CD4-positive, alpha-beta memory T cell (primary cell): ENCODE measurements at regions of chr19 and their contacts with region 1.

Region 1: GRCh38 chr19:23799321-23799720 is 40.6 kb upstream of the ZNF681 start:
- DNase-seq: peak; percentile 59 to 73 (median 65)
- H3K4me3 ChIP-seq: peak overlapping the region in 1 of 2 donors; percentile 45
- H3K4me3 Mint-ChIP-seq: peak overlapping the region; percentile 82 to 94 (median 88)
- H3K27ac ChIP-seq: peak overlapping the region; percentile 51
- H3K27ac Mint-ChIP-seq: peak overlapping the region; percentile 93 to 98 (median 96)
- H3K4me1 ChIP-seq: peaks cover 46% of the 10 kb centered on the region
- H3K4me1 Mint-ChIP-seq: peaks cover 26 to 52% (median 34%) of the 10 kb centered on the region in 4 donors
- H3K27me3 ChIP-seq: no peaks in the 10 kb centered on the region
- H3K27me3 Mint-ChIP-seq: no peaks in the 10 kb centered on the region

Region 2: GRCh38 chr19:23378948-23379347 is 420.4 kb before region 1 on chr19:
- CTCF ChIA-PET with region 1: no interaction called
- POLR2A ChIA-PET with region 1: interaction called, 19 read pairs
- intact Hi-C with region 1: no loop called
- DNase-seq: no peak
- H3K4me3 ChIP-seq: no peak overlapping the region
- H3K4me3 Mint-ChIP-seq: no peak overlapping the region
- H3K27ac ChIP-seq: no peak overlapping the region
- H3K27ac Mint-ChIP-seq: peak overlapping the region in 1 of 7 donors; percentile 77
- H3K4me1 ChIP-seq: no peaks in the 10 kb centered on the region
- H3K4me1 Mint-ChIP-seq: peaks cover 1 to 31% (median 18%) of the 10 kb centered on the region in 4 donors
- H3K27me3 ChIP-seq: no peaks in the 10 kb centered on the region
- H3K27me3 Mint-ChIP-seq: no peaks in the 10 kb centered on the region

Region 3: DNA sequence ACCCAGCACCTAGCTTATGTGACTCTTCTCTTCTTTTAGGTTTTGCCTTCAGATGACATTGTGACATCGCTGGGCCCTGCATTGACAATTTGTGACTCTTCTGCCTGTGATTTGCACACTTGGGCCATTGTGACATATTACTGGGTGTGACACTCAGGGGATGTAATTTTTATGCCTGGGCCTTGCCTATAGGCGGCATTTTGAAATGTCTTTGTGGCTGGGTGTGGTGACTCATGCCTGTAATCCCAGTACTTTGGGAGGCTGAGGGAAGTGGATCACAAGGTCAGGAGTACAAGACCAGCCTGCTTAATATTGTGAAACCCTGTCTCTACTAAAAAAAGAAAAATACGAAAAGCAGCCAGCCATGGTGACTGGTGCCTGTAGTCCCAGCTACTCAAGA is 12.2 kb before region 1 on chr19:
- CTCF ChIA-PET with region 1: no interaction called
- POLR2A ChIA-PET with region 1: no interaction called
- intact Hi-C with region 1: no loop called
- DNase-seq: no peak
- H3K4me3 ChIP-seq: no peak overlapping the region
- H3K4me3 Mint-ChIP-seq: no peak overlapping the region
- H3K27ac ChIP-seq: no peak overlapping the region
- H3K27ac Mint-ChIP-seq: peak overlapping the region in 1 of 7 donors; percentile 62
- H3K4me1 ChIP-seq: no peaks in the 10 kb centered on the region
- H3K4me1 Mint-ChIP-seq: peaks cover 0 to 4% (median 0%) of the 10 kb centered on the region in 4 donors
- H3K27me3 ChIP-seq: no peaks in the 10 kb centered on the region
- H3K27me3 Mint-ChIP-seq: no peaks in the 10 kb centered on the region

Region 4: DNA sequence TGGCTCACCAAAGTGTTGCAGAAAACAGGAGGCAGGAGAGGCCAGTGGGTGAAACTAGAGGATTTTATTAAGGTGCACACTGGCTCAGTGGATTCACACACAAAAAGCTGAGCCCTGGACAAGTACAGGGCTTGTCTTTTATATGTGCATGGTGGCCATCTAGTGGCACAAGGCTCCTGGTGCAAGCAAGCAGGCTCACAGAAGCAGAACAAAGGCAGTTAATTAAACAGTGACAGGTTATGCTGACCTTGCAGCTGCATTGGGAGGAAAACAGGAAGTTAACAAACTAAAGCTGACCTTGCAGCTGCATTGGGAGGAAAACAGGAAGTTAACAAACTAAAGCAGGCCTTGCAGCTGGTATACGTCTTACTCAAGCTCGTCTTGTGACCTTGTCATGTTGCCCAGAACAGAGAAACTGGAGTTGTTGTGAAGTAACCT is 24.6 kb after region 1 on chr19:
- CTCF ChIA-PET with region 1: no interaction called
- POLR2A ChIA-PET with region 1: no interaction called
- intact Hi-C with region 1: no loop called
- DNase-seq: peak in 2 of 5 donors; percentile 20 to 26
- H3K4me3 ChIP-seq: no peak overlapping the region
- H3K4me3 Mint-ChIP-seq: peak overlapping the region in 2 of 8 donors; percentile 20 to 41
- H3K27ac ChIP-seq: no peak overlapping the region
- H3K27ac Mint-ChIP-seq: peak overlapping the region in 1 of 7 donors; percentile 46
- H3K4me1 ChIP-seq: no peaks in the 10 kb centered on the region
- H3K4me1 Mint-ChIP-seq: peaks cover 0 to 4% (median 0%) of the 10 kb centered on the region in 4 donors
- H3K27me3 ChIP-seq: no peaks in the 10 kb centered on the region
- H3K27me3 Mint-ChIP-seq: no peaks in the 10 kb centered on the region

Region 5: GRCh38 chr19:23901360-23901759 is 102.0 kb after region 1 on chr19:
- CTCF ChIA-PET with region 1: no interaction called
- POLR2A ChIA-PET with region 1: no interaction called
- intact Hi-C with region 1: no loop called
- DNase-seq: no peak
- H3K4me3 ChIP-seq: no peak overlapping the region
- H3K4me3 Mint-ChIP-seq: no peak overlapping the region
- H3K27ac ChIP-seq: no peak overlapping the region
- H3K27ac Mint-ChIP-seq: no peak overlapping the region
- H3K4me1 ChIP-seq: no peaks in the 10 kb centered on the region
- H3K4me1 Mint-ChIP-seq: no peaks in the 10 kb centered on the region
- H3K27me3 ChIP-seq: no peaks in the 10 kb centered on the region
- H3K27me3 Mint-ChIP-seq: no peaks in the 10 kb centered on the region